Activated B cell treated with CpG ODN at 0.5 μM for 24 hours (primary cell): ENCODE measurements at regions of chr17 and their contacts with region 1.

Region 1: DNA sequence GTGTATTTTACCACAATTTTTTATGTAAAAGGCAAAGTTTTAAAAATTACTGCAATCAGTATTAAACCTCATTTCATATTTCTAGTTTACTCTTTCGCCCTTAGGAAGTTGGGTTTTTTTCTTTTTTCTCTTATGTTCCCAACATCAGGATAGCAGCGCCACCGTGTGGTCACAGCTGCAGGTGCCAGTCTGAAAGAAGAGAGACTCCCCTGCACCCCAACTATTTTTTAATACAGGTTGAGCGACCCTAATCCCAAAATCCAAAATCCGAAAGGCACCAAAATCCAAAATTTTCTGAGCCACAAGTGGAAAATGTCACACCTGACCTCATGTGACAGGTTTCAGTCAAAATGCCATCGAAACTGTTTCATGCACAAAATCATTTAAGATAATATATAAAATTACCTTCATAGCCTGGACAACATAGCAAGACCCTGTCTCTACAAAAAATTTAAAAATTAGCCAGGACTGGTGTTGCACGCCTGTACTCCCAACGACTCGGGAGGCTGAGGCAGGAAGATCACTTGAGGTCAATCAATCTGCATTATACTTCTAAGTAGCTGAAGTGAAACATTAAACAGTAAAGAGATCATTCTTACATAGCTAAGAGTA is 21.8 kb upstream of the ASGR2 start:
- DNase-seq: peak; percentile 60
- ATAC-seq: no peak
- H3K4me3 Mint-ChIP-seq: no peak overlapping the region
- H3K27ac Mint-ChIP-seq: no peak overlapping the region
- H3K4me1 Mint-ChIP-seq: peaks cover 27% of the 10 kb centered on the region
- H3K27me3 Mint-ChIP-seq: peaks cover 9% of the 10 kb centered on the region
- CTCF ChIP-seq: no peak

Region 2: DNA sequence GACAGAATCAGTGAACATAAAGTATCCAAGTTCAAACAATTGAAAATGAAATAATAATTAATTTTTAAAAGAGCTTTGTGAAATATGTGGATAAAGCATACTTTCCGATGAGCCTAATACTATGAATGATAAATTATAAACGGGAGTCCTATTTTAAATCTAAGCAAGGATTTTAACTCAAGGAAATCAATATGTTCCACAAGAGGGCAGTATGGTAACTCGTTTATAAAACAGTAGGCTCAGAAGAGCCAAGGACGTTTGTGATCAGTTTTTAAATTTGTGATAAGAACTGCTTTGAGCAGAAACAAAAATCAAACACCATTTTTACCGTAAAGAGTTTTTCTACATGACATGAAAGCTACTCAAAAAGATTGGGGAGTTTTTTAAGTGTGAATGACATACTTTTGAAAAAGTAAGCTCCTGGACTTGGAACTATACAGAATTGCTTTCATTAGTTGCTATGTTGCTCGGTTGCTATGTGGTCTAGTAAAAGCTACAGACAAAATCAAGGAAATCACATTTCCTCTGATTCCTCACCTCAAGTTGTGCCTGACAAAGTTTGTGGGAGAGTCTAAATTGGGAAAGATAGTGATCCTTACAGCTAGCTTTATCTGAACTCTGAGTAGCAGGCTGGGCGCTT is 293.0 kb before region 1 on chr17:
- CTCF ChIA-PET with region 1: interaction called, 7 read pairs
- POLR2A ChIA-PET with region 1: no interaction called
- intact Hi-C with region 1: loop called (anchors 5 kb)
- DNase-seq: no peak
- ATAC-seq: peak; percentile 25
- H3K4me3 Mint-ChIP-seq: no peak overlapping the region
- H3K27ac Mint-ChIP-seq: no peak overlapping the region
- H3K4me1 Mint-ChIP-seq: no peaks in the 10 kb centered on the region
- H3K27me3 Mint-ChIP-seq: peaks cover 44% of the 10 kb centered on the region
- CTCF ChIP-seq: peak; percentile 36

Region 3: DNA sequence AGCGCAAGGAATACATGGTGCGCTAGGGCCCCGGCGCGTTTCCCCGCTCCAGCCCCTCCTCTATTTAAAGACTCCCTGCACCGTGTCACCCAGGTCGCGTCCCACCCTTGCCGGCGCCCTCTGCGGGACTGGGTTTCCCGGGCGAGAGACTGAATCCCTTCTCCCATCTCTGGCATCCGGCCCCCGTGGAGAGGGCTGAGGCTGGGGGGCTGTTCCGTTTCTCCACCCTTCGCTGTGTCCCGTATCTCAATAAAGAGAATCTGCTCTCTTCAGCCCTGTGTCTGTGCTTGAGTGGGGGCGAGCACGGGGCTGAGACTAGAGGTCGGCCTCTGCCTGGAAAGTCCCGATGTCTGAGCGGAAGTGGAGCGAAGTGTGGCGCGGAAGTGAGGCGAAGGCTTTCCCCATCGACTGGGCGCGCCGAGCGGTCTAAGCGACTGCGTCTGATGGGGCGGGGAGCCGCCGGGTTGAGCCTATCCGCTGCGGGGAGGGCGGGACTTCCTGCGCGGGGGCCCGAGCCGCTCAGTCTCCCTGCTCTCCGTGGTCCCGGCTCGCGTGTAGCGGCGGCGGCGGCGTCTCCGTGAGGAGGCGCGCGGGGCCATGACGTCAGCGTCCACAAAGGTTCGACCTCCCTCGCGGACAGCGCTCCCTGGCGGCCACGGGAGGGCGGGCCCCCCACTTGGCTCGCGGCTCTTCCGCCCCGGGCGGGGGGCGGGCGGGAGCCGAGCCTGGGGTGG is 121.9 kb before region 1 on chr17:
- CTCF ChIA-PET with region 1: interaction called, 3 read pairs
- POLR2A ChIA-PET with region 1: interaction called, 13 read pairs
- intact Hi-C with region 1: no loop called
- DNase-seq: peak; percentile 96
- ATAC-seq: peak; percentile 84
- H3K4me3 Mint-ChIP-seq: peak overlapping the region; percentile 95
- H3K27ac Mint-ChIP-seq: peak overlapping the region; percentile 100
- H3K4me1 Mint-ChIP-seq: peaks cover 61% of the 10 kb centered on the region
- H3K27me3 Mint-ChIP-seq: no peaks in the 10 kb centered on the region
- CTCF ChIP-seq: no peak

Region 4: GRCh38 chr17:7060165-7060891 is 76.0 kb before region 1 on chr17:
- CTCF ChIA-PET with region 1: interaction called, 109 read pairs
- POLR2A ChIA-PET with region 1: interaction called, 20 read pairs
- intact Hi-C with region 1: no loop called
- DNase-seq: no peak
- ATAC-seq: peak; percentile 14
- H3K4me3 Mint-ChIP-seq: no peak overlapping the region
- H3K27ac Mint-ChIP-seq: no peak overlapping the region
- H3K4me1 Mint-ChIP-seq: peaks cover 2% of the 10 kb centered on the region
- H3K27me3 Mint-ChIP-seq: peaks cover 24% of the 10 kb centered on the region
- CTCF ChIP-seq: no peak

Region 5: DNA sequence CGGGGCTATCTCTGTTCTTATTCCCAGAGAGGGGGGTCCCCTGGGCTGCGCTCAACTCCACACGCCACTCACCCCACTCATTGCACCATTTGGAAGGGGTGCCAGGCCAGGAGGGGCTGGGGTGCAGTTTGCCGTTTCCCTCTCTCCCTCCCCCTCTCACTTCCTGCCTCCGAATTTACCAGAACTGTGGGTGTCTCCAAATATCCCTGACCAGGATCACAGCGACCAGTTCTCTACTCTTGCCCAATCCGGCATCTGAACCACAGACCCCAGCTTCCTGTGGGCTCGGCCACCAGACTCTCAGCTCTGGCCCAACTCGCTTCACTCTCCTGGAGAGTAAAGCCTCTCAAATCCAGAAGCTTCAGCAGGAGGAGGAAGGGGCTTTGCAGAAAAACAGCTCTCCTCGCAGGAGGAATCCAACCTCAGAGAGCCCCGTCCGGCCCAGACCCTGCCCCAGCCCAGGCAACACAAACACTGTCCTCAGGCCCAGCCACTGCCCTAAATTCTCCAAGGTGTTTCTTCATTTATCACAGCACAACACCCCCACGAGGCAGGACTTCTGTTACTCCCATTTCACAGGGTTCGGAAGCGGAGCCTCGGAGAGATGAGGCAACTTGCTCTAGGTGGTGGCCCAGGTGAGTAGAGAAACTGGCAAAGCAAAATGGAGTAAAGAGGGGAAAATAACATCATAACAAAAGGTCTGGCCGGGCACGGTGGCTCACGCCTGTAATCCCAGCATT is 21.3 kb before region 1 on chr17:
- CTCF ChIA-PET with region 1: no interaction called
- POLR2A ChIA-PET with region 1: interaction called, 11 read pairs
- intact Hi-C with region 1: no loop called
- DNase-seq: no peak
- ATAC-seq: no peak
- H3K4me3 Mint-ChIP-seq: no peak overlapping the region
- H3K27ac Mint-ChIP-seq: no peak overlapping the region
- H3K4me1 Mint-ChIP-seq: peaks cover under 1% of the 10 kb centered on the region
- H3K27me3 Mint-ChIP-seq: peaks cover 8% of the 10 kb centered on the region
- CTCF ChIP-seq: no peak

Region 6: DNA sequence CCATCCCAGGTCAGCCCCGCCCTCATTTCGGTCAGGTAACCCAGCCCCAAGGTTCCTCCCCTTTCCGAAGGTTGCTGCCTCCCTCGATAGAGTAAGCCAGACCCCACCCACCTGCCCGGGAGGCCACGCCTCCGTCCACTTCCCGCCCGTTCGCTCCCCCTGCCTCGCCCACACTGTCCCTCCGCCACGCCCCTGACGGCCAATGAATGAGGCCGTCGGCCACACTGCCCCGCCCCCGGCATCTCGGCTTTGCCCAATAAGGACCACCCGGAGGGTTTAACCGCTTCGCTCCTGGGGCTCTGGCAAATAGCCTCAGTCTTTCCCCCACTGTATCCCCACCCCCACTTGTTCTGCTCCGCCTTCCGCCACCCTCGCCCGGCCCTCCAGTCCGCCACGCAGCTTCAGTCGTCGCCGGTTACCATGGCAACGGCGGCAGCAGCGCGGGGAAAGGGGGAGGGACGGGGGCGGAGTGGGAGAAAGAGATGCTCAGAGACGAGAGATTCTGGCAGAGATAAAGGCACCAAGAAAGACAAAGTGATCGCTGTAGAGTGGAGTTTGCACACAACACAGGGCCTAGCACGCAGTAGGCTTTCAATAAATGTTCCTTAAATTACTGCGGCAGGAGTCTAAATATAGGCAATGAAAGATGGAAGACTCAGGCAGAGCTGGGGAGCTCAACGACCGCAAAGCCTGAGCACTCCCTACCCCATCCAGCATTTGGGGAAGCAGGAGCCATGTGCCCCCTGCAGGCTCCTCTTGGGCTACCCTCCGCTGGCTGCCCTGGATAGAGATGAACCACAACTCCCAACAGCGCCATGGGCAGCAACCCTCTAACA is 78.1 kb after region 1 on chr17:
- CTCF ChIA-PET with region 1: no interaction called
- POLR2A ChIA-PET with region 1: interaction called, 4 read pairs
- intact Hi-C with region 1: loop called (anchors 1 kb)
- DNase-seq: peak; percentile 98
- ATAC-seq: peak; percentile 86
- H3K4me3 Mint-ChIP-seq: peak overlapping the region; percentile 88
- H3K27ac Mint-ChIP-seq: peak overlapping the region; percentile 94
- H3K4me1 Mint-ChIP-seq: peaks cover 53% of the 10 kb centered on the region
- H3K27me3 Mint-ChIP-seq: no peaks in the 10 kb centered on the region
- CTCF ChIP-seq: no peak